Endothelial cell of umbilical vein (primary cell): ENCODE measurements at regions of chr14 and their contacts with region 1.

Region 1: GRCh38 chr14:80987235-80988032 is 32.0 kb downstream of the TSHR start:
- DNase-seq: peak; percentile 73
- H3K4me3 ChIP-seq: no peak overlapping the region
- H3K27ac ChIP-seq: no peak overlapping the region
- H3K4me1 ChIP-seq: no peaks in the 10 kb centered on the region
- H3K27me3 ChIP-seq: peaks cover 0 to 9% of the 10 kb centered on the region in 2 experiments
- CTCF ChIP-seq: peak; percentile 76 to 89
- POLR2A ChIP-seq: no peak

Region 2: DNA sequence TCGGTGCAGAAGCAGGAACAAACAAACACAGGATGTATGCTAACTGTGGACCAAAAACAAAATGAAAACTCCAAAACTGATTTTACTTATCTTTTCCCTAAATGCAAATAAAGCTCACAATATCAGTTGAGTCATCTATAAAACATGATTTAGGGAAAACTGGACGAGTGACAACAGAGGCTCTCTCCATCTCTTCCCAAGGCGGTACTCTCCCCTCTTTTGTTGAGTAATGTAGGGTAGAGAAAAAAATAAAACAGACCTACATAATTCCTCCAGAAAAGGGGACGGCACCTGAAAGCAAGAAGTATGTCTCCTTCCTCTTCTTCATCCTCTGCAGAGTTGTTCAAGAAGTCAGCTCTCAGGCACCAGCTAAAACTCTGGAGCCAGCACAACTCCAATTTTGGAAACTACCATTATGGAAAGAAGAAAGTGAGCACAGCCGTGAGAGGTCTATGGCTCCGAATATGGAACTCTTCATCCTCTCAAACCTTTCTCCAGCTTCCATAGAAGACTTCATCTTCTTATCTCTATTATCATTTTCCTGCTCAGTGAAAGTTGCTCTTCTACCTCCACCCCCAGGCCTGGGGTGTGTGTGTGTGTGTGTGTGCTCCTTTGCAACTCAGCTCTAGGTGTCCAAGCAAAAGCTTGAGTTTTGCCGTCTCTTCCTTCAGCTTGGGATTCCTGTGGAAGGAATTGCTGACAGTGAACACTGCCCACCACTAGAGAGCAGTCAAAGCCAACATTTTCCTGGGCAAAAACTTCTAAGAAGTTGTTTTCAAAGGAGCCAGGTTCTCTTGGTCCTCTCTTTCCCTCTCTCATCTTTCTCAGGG is 931.6 kb before region 1 on chr14:
- CTCF ChIA-PET with region 1: interaction called, 28 read pairs
- POLR2A ChIA-PET with region 1: no interaction called
- dilution Hi-C with region 1: no loop called
- intact Hi-C with region 1: loop called (anchors 1 kb)
- DNase-seq: peak; percentile 47
- H3K4me3 ChIP-seq: no peak overlapping the region
- H3K27ac ChIP-seq: no peak overlapping the region
- H3K4me1 ChIP-seq: no peaks in the 10 kb centered on the region
- H3K27me3 ChIP-seq: no peaks in the 10 kb centered on the region
- CTCF ChIP-seq: peak; percentile 46 to 61
- POLR2A ChIP-seq: no peak

Region 3: DNA sequence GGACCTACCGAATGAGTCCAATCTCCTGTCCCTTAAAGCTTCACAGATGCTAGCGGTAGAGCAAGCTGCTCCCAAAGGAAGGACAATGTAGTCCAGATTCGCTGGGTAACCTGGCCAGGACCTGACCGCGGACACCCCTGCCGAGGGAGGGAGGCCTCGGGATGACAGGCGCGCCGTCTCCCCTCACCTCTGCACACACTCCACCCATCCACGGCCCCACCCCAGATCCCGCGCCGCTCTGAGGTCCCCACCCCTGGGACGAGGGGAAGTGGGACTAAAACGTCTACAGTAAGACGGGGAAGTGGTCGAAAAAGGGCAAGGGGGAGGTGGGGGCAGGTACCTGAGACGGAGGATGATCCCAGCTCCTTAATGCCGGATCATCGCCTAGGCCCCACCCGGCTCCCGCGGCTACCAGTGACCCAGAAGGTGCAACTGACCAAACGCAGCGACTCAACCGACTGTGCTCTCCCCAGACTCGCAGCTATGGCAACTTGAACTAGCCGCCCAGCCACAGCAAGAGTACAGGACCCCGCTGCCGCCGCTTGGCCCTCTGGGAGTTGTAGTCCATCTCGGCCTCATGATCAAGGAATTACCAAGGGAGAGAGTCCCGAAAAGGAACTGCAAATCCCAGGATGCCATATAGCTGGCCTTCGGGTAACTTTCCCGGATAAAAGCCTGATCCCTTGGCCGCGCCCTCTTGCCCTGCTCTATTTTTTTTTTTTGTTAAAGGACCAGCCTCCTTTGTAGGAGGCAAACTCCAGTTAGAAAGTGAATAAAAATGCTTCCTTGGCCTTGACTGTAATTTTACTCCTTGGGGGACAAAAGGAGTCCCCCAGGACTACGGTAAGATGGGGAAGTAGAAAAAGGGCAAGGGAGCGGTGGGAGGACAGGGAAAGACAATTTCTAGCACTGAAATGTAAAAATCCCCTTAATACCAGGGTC is 45.9 kb before region 1 on chr14 and contains the start of gene CEP128:
- CTCF ChIA-PET with region 1: interaction called, 17 read pairs
- POLR2A ChIA-PET with region 1: no interaction called
- dilution Hi-C with region 1: no loop called
- intact Hi-C with region 1: no loop called
- DNase-seq: peak; percentile 98
- H3K4me3 ChIP-seq: peak within 1 kb of the TSS; percentile 25 to 75 (median 74)
- H3K27ac ChIP-seq: peak within 1 kb of the TSS; percentile 26
- H3K4me1 ChIP-seq: peaks cover 7% of the 10 kb centered on the region
- H3K27me3 ChIP-seq: no peaks in the 10 kb centered on the region
- CTCF ChIP-seq: no peak
- POLR2A ChIP-seq: no peak
- total RNA-seq, gene CEP128: 22.9 and 23.7 TPM in 2 replicates

Region 4: DNA sequence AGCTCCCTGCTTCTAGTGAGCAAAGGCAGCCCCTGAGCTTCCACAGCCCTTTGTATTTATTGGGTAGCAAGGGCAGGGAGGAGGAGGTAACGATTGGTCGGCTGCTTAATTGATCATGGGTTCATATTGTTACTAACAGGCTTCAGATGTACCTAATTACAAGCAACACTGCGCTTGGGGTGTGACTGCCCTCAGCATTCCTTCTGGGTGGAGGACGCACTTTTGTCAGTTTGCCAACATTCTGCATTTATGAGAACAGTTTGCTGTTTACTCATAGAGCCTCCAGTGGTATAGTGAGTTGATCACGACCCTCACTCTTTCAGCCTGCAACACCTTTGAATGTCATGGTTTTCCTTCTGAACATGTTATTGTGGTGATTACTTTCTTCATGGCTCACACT is 22.4 kb before region 1 on chr14:
- CTCF ChIA-PET with region 1: interaction called, 99 read pairs
- POLR2A ChIA-PET with region 1: no interaction called
- dilution Hi-C with region 1: no loop called
- intact Hi-C with region 1: no loop called
- DNase-seq: no peak
- H3K4me3 ChIP-seq: no peak overlapping the region
- H3K27ac ChIP-seq: no peak overlapping the region
- H3K4me1 ChIP-seq: no peaks in the 10 kb centered on the region
- H3K27me3 ChIP-seq: peaks cover 0 to 2% of the 10 kb centered on the region in 2 experiments
- CTCF ChIP-seq: no peak
- POLR2A ChIP-seq: no peak

Region 5: DNA sequence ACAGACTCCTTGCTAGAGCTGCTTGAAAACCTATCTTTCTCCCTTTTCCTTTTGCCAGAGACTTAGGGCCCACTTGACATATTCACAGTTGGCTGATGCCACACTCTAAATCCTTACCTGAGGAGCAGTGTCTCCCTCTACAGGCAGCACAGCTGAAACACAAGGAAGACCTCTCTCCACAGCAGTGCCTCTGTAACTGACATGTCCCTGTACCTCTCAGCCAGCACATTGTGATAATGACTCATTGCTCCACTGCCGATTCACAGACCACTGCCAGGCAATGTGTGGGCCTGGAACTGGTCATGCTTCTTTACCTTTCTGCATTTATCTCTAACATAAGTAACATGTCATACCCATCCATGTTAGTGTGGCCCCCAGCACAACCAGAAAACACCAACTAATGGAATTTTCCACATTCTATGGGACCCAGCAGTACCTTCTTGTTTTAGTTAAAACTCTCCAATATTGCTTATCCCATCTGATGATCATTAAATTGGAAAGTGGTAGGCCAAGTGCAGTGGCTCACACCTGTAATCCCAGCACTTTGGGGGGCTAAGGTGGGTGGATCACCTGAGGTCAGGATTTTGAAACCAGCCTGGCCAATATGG is 176.8 kb after region 1 on chr14:
- CTCF ChIA-PET with region 1: interaction called, 11 read pairs
- POLR2A ChIA-PET with region 1: no interaction called
- dilution Hi-C with region 1: no loop called
- intact Hi-C with region 1: no loop called
- DNase-seq: peak; percentile 52
- H3K4me3 ChIP-seq: no peak overlapping the region
- H3K27ac ChIP-seq: no peak overlapping the region
- H3K4me1 ChIP-seq: no peaks in the 10 kb centered on the region
- H3K27me3 ChIP-seq: no peaks in the 10 kb centered on the region
- CTCF ChIP-seq: peak; percentile 33 to 47
- POLR2A ChIP-seq: no peak

Region 6: DNA sequence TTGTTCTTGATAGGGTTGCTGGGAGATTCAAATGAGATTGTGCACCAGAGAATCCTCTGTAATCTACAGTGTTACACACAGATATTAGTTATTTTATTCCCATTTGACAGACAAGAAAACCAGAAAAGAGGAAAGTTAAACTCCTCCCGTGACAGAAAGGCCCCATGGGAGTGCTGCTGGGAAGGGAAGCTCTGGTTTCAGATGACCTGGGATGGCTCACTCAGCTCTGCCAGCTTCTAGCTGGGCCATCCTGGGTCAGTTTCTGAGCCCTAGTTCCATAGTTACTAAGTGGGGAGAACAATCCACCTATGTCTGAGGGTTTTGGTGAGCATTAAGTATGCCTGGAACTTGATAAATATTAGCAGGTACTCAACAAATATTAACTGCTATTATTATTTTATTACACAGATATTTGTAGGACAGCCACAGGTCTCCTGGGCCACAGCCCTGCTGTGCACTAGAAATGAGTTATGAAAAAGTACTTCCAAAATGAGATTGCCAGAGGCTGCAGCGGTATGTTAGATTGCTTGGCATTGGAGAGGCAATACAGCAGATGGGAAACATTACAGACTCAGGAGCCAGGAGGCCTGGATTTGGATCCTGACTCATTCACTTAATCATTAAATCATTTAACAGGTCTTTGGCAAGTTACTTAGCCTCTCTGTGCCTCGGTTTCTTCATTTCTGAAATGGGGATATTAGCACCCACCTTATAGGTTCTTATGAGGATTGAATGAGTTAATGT is 459.8 kb after region 1 on chr14:
- CTCF ChIA-PET with region 1: no interaction called
- POLR2A ChIA-PET with region 1: no interaction called
- dilution Hi-C with region 1: no loop called
- intact Hi-C with region 1: no loop called
- DNase-seq: no peak
- H3K4me3 ChIP-seq: no peak overlapping the region
- H3K27ac ChIP-seq: no peak overlapping the region
- H3K4me1 ChIP-seq: no peaks in the 10 kb centered on the region
- H3K27me3 ChIP-seq: peaks cover 2 to 10% of the 10 kb centered on the region in 2 experiments
- CTCF ChIP-seq: no peak
- POLR2A ChIP-seq: no peak

Region 7: DNA sequence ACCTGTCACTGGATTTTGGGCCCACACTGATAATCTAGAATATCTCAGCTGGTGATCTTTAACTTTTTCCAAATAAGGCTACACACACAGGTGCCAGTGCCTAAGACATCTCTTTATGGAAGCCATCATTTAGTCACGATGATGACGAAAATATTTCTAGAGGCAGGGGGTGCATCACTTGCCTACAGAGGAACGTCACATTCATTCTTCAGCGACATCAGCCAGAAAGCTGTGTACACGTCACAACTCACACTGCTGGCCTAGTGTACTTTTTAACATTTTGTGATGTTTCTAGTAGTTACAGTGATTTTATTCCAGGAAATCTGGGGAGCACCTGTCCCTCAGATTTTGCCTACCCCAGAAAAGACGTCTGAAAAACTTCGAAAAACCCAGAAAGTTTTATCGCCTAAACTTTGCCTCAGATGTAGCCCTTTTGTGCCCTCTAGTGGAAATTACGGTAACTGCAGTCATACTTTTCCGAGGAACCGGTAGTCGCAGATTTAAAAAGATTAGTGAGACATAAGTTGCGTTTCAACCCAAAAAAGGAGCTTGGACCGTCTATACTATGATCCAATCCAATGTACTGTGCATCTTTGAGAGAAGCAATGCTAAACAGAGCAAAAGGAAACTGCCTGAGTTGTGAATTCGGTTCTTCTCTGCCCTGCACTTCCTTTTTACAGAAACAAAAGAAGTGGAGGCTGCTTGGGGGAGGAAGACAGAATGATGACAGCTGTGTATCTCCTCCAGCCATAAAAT is 477.0 kb after region 1 on chr14:
- CTCF ChIA-PET with region 1: interaction called, 5 read pairs
- POLR2A ChIA-PET with region 1: no interaction called
- dilution Hi-C with region 1: no loop called
- intact Hi-C with region 1: loop called (anchors 5 kb)
- DNase-seq: peak; percentile 79
- H3K4me3 ChIP-seq: peak overlapping the region; percentile 38 to 86 (median 41)
- H3K27ac ChIP-seq: no peak overlapping the region
- H3K4me1 ChIP-seq: no peaks in the 10 kb centered on the region
- H3K27me3 ChIP-seq: no peaks in the 10 kb centered on the region
- CTCF ChIP-seq: peak; percentile 68 to 82
- POLR2A ChIP-seq: no peak